Mammary epithelial cell (primary cell): ENCODE measurements at regions of chr11 and their contacts with region 1.

Region 1: GRCh38 chr11:71251761-71252443 is 475 bp downstream of the SHANK2 start:
- DNase-seq: no peak
- H3K4me3 ChIP-seq: peak overlapping the region; percentile 62 to 78 (median 70)
- H3K27ac ChIP-seq: peak overlapping the region; percentile 16
- H3K4me1 ChIP-seq: peaks cover 14% of the 10 kb centered on the region
- H3K27me3 ChIP-seq: no peaks in the 10 kb centered on the region
- CTCF ChIP-seq: peak in 1 of 2 donors; percentile 47

Region 2: GRCh38 chr11:71120490-71120896 is 131.4 kb before region 1 on chr11:
- CTCF ChIA-PET with region 1: no interaction called
- dilution Hi-C with region 1: no loop called
- in situ Hi-C with region 1: no loop called
- intact Hi-C with region 1: loop called (anchors 2 kb)
- DNase-seq: peak; percentile 48
- H3K4me3 ChIP-seq: no peak overlapping the region
- H3K27ac ChIP-seq: no peak overlapping the region
- H3K4me1 ChIP-seq: no peaks in the 10 kb centered on the region
- H3K27me3 ChIP-seq: no peaks in the 10 kb centered on the region
- CTCF ChIP-seq: peak; percentile 46 to 63

Region 3: DNA sequence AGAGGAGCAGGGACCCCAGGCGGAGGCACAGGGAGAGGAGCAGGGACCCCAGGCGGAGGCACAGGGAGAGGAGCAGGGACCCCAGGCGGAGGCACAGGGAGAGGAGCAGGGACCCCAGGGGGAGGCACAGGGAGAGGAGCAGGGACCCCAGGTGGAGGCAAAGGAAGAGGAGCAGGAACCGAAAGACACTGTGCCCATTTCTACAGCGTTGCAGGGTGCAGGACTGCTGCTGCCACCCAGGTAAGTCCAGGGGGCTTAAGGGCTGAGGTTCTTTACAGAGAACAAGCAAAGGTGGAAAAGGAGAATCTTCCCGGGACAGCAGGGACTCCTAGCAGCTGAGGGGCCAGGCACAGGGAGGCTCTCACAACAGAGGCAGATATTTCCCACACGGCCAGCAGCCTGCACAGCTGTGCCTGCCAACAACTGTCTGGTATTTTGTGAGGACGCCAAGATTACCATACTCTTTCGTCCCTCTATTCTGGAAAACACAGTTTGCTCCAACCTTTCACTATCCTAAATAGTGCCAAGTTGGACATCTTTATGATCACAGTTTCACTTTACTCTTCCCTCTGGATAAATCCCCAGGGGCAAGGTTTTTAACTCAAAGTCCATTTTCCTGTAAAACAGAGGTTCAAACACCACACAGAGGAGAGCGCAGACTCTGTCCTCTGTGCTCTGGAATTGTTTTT is 38.9 kb before region 1 on chr11:
- CTCF ChIA-PET with region 1: no interaction called
- dilution Hi-C with region 1: loop called (anchors 5 kb)
- in situ Hi-C with region 1: no loop called
- intact Hi-C with region 1: no loop called
- DNase-seq: no peak
- H3K4me3 ChIP-seq: no peak overlapping the region
- H3K27ac ChIP-seq: no peak overlapping the region
- H3K4me1 ChIP-seq: no peaks in the 10 kb centered on the region
- H3K27me3 ChIP-seq: no peaks in the 10 kb centered on the region
- CTCF ChIP-seq: no peak

Region 4: DNA sequence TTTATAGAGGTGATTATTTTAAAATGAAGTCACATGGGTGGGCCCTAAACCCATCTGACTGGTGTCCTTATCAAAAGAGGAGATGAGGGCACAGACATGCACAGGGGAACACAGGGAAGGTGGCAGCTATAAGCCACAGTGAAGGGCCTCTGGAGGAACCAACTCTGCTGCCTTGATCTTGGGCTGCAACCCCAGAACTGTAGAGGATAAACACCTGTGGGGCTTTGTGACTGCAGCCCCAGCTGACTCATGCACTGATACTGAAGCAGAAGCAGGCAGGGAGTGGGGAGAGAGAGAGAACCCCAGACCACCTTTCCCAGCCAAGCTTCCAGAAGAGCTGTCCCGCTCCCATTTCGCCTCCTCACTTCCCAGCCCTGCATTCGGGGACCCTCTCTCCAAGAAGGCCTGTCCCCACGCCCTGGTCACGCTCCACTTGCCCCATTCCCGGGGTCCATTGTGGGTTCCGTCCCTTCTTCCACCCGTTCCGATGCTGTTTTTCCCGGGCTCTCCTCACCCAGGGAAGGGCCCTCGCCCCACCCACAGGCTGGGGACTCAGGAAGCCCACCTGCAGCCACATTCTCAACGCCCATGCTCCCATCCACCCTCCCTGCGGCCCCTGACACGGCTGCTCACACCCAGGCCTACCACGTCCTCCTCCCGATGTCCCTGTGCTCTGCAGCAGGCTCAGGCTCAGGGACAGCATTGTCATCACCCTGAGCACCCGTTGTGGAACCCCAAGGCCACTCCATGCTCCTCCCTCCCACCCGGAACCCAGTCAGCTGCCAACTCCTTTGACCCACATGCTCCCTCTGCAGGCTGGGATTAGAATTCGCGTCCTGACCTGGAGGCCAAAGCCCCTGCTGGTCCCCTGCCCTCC is 91.3 kb after region 1 on chr11:
- CTCF ChIA-PET with region 1: interaction called, 3 read pairs
- dilution Hi-C with region 1: no loop called
- in situ Hi-C with region 1: no loop called
- intact Hi-C with region 1: loop called (anchors 2 kb)
- DNase-seq: peak; percentile 30
- H3K4me3 ChIP-seq: no peak overlapping the region
- H3K27ac ChIP-seq: no peak overlapping the region
- H3K4me1 ChIP-seq: peaks cover 28% of the 10 kb centered on the region
- H3K27me3 ChIP-seq: peaks cover 3% of the 10 kb centered on the region
- CTCF ChIP-seq: peak; percentile 52 to 75

Region 5: DNA sequence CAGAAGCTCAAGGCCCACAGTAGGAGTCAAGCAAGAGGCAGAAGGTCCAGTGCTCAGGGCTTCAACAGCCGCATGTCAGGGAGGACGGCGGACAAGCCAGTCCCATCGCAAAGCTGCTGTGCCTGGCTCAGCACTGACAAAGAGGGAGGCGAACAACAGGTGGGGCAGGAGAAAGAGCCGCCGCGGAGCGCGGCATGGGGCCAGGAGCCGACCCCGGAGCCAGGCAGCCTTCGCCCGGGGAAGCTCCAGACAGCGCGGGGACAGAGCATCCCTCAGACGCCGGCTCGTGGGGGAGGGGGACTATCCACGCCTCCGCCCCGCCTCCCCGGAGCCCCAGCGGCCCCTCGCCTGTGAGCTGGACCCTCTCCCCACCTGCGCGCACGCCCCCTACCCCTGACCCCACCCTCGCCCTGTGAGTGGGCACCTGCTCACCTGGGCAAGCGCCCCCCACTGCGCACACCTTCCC is 195.9 kb after region 1 on chr11:
- CTCF ChIA-PET with region 1: no interaction called
- dilution Hi-C with region 1: no loop called
- in situ Hi-C with region 1: no loop called
- intact Hi-C with region 1: no loop called
- DNase-seq: peak; percentile 26
- H3K4me3 ChIP-seq: peak overlapping the region; percentile 51 to 97 (median 82)
- H3K27ac ChIP-seq: peak overlapping the region; percentile 0
- H3K4me1 ChIP-seq: peaks cover 29% of the 10 kb centered on the region
- H3K27me3 ChIP-seq: no peaks in the 10 kb centered on the region
- CTCF ChIP-seq: no peak